ENCODE measurements at regions of chr2 and their contacts with region 1.

Region 1: DNA sequence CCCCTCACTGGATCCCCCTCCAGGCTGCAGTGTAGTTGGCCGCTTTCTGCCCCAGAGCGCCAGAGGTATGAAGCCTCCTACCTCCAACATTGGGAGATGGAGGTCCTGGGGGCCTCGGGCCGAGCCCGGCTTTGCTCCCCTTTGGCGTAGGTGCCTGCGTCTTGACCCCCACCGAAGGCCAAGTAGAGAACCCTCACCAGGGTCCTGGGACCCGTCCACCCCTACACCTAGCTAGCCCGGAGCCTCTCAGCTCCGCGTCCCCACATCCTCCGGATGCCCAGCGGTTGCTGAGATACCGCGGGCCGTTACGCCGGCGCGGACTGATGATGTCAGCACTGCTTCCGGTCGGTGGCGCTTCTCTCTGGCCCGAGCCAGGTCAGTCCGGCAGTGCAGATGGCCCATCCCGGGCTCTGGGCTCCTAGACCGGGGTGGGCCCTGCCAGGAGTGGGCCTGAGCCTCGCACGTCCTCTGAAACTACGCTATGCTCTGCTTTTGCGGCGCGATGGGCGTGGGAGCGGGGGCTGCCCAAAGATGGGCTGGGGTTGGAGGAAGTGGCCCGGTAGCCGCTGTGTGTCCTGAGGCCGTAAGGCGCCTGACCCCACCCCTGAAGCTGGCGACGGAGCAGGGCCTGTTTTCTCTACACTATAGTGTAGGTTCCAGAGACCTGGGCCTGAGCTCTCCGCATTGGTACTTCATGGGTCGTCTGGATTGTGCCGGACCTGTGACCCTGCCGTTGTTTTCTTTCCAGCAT is at the starts of genes GLB1L and STK16:
- DNase-seq: peak; percentile 87
- H3K4me3 Mint-ChIP-seq: peak within 1 kb of the TSS; percentile 80
- H3K27ac Mint-ChIP-seq: peak within 1 kb of the TSS; percentile 85
- H3K4me1 Mint-ChIP-seq: peaks cover 21% of the 10 kb centered on the region
- H3K27me3 Mint-ChIP-seq: no peaks in the 10 kb centered on the region
- CTCF ChIP-seq: no peak
- total RNA-seq, gene GLB1L: 4.9 and 7.5 TPM in 2 replicates
- total RNA-seq, gene STK16: 33.4 and 42.7 TPM in 2 replicates

Region 2: DNA sequence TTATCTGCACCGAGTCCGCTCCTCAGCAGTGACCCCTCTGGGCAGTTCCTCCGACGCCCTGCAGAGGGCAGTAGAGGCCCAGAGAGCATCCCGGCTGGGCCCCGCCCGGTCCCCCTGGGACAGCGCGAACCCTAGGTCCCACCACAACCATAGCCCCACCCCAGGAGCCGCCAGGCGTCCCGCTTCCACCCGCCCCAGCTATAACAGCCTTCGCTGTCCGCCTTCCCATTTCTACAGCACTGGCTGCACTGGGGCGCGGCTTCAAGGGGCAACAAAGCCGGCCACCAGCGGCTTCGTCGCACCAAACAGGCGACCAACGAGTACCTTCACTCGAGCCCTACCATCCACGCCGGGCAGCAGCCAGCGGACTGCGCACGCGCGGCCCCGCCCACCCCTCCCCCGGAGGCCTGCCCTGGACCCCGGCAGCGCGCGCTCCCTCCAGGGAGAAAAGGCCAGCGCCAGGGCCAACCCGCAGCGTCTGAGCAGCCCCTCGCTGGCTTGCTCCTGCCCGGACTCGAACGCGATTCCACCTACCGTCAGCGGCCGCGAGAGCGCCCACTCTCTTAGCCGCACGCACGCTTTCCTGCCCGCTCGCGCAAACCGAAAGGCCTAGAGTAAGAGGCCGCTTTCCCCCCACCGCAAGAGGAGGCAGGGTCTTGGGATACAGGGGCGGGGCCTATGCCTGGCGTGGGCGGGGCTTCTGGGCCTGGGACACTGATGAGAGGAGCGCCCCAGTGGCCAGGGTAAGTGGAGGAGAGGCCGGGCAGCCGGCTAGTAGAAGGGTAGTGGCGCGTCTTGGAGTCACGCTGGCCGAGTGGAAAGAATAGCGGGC is 84.9 kb before region 1 on chr2 and contains the start of gene NHEJ1:
- CTCF ChIA-PET with region 1: interaction called, 8 read pairs
- POLR2A ChIA-PET with region 1: interaction called, 6 read pairs
- intact Hi-C with region 1: loop called (anchors 1 kb)
- DNase-seq: peak; percentile 95
- H3K4me3 Mint-ChIP-seq: peak within 1 kb of the TSS; percentile 77
- H3K27ac Mint-ChIP-seq: peak within 1 kb of the TSS; percentile 37
- H3K4me1 Mint-ChIP-seq: peaks cover 14% of the 10 kb centered on the region
- H3K27me3 Mint-ChIP-seq: no peaks in the 10 kb centered on the region
- CTCF ChIP-seq: peak; percentile 96
- total RNA-seq, gene NHEJ1: 7.5 and 11.5 TPM in 2 replicates

Region 3: DNA sequence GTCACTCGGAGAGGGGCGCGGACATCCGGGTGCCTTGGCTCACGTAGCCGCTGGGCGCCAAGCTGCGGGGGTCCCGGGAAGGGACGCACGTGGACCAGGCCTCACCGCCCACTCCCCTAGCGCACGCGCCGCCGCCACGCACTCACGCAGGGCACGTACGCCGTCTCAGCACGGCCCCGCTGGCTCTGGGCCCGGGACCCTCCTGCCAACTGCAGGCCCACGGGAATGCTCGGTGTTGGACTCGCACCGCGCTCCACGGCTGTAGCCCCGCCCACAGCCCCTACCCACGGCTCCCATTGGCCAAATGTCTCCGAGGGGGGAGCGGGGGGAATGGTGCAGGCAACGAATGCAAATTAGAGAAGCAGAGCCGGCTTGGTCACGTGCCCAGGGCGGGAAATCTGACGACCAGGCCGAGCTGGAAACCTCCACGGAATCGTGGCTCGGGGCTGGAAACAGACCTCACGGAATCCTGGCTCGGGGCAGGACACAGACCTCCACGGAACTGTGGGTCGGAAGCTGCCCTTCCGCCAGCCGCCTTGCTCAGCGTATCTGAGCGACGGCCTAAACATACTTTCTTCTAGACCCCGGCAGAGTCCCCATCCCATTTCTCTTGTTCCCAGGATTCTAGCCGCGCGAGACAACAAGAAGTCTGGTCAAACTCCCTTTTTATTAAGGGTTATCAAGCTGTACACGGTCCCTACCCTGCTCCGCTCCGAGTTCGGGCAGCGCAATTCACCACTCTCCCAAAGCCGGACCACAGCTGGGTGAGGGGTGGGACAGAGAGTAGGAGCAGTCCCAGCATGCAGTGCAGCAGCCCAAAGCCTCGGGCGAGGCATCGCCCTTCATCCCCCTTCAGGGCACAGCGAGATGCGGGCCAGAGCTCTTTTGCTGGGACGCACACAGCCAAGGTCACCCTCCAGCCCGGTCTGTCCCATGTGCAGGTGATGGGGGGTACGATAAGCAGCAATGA is 26.3 kb before region 1 on chr2 and contains the start of gene ABCB6:
- CTCF ChIA-PET with region 1: interaction called, 5 read pairs
- POLR2A ChIA-PET with region 1: interaction called, 63 read pairs
- intact Hi-C with region 1: no loop called
- DNase-seq: peak; percentile 91
- H3K4me3 Mint-ChIP-seq: peak within 1 kb of the TSS; percentile 82
- H3K27ac Mint-ChIP-seq: peak within 1 kb of the TSS; percentile 83
- H3K4me1 Mint-ChIP-seq: no peaks in the 10 kb centered on the region
- H3K27me3 Mint-ChIP-seq: no peaks in the 10 kb centered on the region
- CTCF ChIP-seq: no peak
- total RNA-seq, gene ABCB6: 13.8 and 18.8 TPM in 2 replicates

Region 4: DNA sequence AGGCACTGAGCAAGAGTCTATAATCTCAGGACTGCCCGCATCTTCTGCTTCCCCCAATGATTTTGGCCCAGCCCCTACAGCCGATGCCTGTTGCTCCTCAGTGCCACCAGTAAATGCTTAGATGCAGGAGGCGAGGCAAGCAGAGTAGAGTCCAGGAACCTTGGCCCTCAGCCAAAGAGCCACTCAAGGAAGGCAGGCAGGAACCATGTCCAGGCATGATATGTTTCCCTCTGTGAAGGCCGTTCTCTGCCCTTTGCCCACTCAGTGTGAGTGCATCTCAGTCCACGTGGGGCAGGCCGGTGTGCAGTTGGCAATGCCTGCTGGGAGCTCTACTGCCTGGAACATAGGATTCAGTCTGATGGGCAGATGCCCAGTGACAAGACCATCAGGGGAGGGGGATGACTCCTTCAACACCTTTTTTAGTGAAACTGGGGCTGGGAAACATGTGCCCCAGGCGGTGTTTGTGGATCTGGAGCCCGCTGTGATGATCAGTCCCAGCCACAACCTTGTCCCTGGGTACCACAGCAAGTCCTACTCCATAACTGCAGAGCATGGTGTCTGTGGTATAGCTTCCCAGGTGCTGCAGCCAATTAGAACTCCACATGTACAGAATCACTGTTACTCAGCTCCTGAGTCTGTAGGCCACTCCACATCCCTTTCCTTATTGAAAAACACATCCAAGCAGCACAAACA is 24.2 kb after region 1 on chr2:
- CTCF ChIA-PET with region 1: interaction called, 5 read pairs
- POLR2A ChIA-PET with region 1: interaction called, 263 read pairs
- intact Hi-C with region 1: no loop called
- DNase-seq: peak; percentile 63
- H3K4me3 Mint-ChIP-seq: no peak overlapping the region
- H3K27ac Mint-ChIP-seq: peak overlapping the region; percentile 58
- H3K4me1 Mint-ChIP-seq: peaks cover 20% of the 10 kb centered on the region
- H3K27me3 Mint-ChIP-seq: no peaks in the 10 kb centered on the region
- CTCF ChIP-seq: no peak

Region 5: GRCh38 chr2:219285894-219286425 is 40.6 kb after region 1 on chr2:
- CTCF ChIA-PET with region 1: interaction called, 3 read pairs
- POLR2A ChIA-PET with region 1: interaction called, 263 read pairs
- intact Hi-C with region 1: no loop called
- DNase-seq: peak; percentile 68
- H3K4me3 Mint-ChIP-seq: peak overlapping the region; percentile 62
- H3K27ac Mint-ChIP-seq: peak overlapping the region; percentile 89
- H3K4me1 Mint-ChIP-seq: peaks cover 39% of the 10 kb centered on the region
- H3K27me3 Mint-ChIP-seq: no peaks in the 10 kb centered on the region
- CTCF ChIP-seq: no peak

Measured in MCF 10A (cell line).